CD4-positive, alpha-beta T cell (primary cell): ENCODE measurements at regions of chr2 and their contacts with region 1.

Region 1: GRCh38 chr2:25784408-25784807 is 93.9 kb downstream of the ASXL2 start:
- DNase-seq: no peak
- ATAC-seq: no peak
- H3K4me3 ChIP-seq: no peak overlapping the region
- H3K4me3 Mint-ChIP-seq: no peak overlapping the region
- H3K27ac ChIP-seq: no peak overlapping the region
- H3K27ac Mint-ChIP-seq: no peak overlapping the region
- H3K4me1 ChIP-seq: no peaks in the 10 kb centered on the region
- H3K4me1 Mint-ChIP-seq: peaks cover 28% of the 10 kb centered on the region
- H3K27me3 ChIP-seq: no peaks in the 10 kb centered on the region
- H3K27me3 Mint-ChIP-seq: no peaks in the 10 kb centered on the region
- CTCF ChIP-seq: no peak

Region 2: GRCh38 chr2:25845843-25846505 is 61.6 kb after region 1 on chr2:
- CTCF ChIA-PET with region 1: no interaction called
- POLR2A ChIA-PET with region 1: no interaction called
- intact Hi-C with region 1: loop called in 1 of 2 experiments (anchors 5 kb)
- DNase-seq: no peak
- ATAC-seq: no peak
- H3K4me3 ChIP-seq: no peak overlapping the region
- H3K4me3 Mint-ChIP-seq: no peak overlapping the region
- H3K27ac ChIP-seq: no peak overlapping the region
- H3K27ac Mint-ChIP-seq: no peak overlapping the region
- H3K4me1 ChIP-seq: peaks cover 4% of the 10 kb centered on the region
- H3K4me1 Mint-ChIP-seq: peaks cover 8% of the 10 kb centered on the region
- H3K27me3 ChIP-seq: no peaks in the 10 kb centered on the region
- H3K27me3 Mint-ChIP-seq: no peaks in the 10 kb centered on the region
- CTCF ChIP-seq: no peak

Region 3: DNA sequence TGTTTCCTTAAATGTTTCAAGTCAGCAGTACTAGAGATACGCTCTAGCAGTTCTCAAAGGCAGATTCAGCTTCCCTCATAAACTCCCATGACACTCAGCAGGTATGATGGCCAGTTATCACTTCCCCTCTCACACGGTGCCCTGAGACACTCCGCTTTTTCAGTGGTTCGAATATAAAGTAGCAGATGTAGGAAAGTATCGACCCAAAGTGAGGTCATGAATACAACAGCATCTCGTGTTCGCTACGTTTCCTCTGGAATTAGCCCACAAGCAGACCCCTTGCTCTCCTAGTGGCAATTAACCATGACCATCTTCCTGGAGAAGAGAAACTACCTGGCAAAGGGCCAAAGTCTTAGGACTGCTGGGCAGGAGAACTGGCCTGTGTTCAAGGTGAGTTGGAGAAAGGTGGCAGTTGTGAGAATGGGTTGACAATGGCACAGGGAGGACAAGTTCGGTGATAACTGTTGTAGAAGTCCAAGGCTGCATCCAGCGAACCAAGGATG is 1257.8 kb after region 1 on chr2:
- CTCF ChIA-PET with region 1: no interaction called
- POLR2A ChIA-PET with region 1: no interaction called
- intact Hi-C with region 1: no loop called
- DNase-seq: no peak
- ATAC-seq: no peak
- H3K4me3 ChIP-seq: no peak overlapping the region
- H3K4me3 Mint-ChIP-seq: no peak overlapping the region
- H3K27ac ChIP-seq: no peak overlapping the region
- H3K27ac Mint-ChIP-seq: peak overlapping the region; percentile 34
- H3K4me1 ChIP-seq: no peaks in the 10 kb centered on the region
- H3K4me1 Mint-ChIP-seq: peaks cover 5% of the 10 kb centered on the region
- H3K27me3 ChIP-seq: no peaks in the 10 kb centered on the region
- H3K27me3 Mint-ChIP-seq: no peaks in the 10 kb centered on the region
- CTCF ChIP-seq: no peak